PC-9 (cell line): ENCODE measurements at regions of chr9 and their contacts with region 1.

Region 1: DNA sequence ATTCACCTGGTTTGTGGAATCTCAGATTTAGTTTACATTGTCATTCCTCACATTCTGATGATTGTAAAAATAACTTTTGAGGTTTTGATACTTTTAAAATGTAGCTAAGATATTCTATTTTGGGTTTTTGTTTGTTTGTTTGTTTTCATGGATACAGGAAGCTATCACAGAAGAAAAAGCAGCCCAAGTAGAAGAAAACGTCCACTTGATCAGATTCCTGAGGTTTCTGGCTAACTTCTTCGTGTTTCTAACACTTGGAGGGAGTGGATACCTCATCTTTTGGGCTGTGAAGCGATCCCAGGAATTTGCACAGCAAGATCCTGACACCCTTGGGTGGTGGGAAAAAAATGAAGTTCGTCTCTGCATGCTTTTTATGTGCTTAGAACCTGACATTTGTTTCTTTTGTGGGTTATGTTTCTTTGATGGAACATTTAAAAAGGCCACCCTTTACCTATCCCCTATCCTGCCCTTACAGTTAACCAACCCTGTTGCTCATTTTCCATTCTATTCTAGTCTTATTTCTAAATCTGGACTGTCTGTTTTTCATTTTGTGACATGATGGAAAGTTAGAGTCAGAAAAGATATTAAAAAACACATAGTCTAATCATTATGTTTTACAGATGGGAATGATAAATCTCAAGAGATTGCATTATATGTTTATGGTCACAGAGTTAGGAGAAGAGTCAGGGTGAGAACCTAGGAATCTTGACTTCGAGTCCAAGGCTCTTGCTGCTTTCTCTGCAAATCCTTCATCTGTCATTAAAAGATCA is 163.7 kb downstream of the ALDH1A1 start:
- DNase-seq: peak; percentile 25 to 53
- H3K4me3 ChIP-seq: no peak overlapping the region
- H3K27ac ChIP-seq: no peak overlapping the region
- H3K4me1 ChIP-seq: 0 out of 2 replicates have a peak, but pooled peaks cover 3% of the 10 kb centered on the region
- H3K27me3 ChIP-seq: no peaks in the 10 kb centered on the region
- CTCF ChIP-seq: no peak

Region 2: GRCh38 chr9:72140582-72140981 is 648.6 kb before region 1 on chr9:
- CTCF ChIA-PET with region 1: no interaction called
- POLR2A ChIA-PET with region 1: interaction called, 10 read pairs
- intact Hi-C with region 1: no loop called
- DNase-seq: peak; percentile 52 to 92
- H3K4me3 ChIP-seq: no peak overlapping the region
- H3K27ac ChIP-seq: peak overlapping the region; percentile 81
- H3K4me1 ChIP-seq: peaks cover 41% of the 10 kb centered on the region
- H3K27me3 ChIP-seq: no peaks in the 10 kb centered on the region
- CTCF ChIP-seq: no peak

Region 3: GRCh38 chr9:72817413-72817812 is 28.3 kb after region 1 on chr9:
- CTCF ChIA-PET with region 1: interaction called, 10 read pairs
- POLR2A ChIA-PET with region 1: no interaction called
- intact Hi-C with region 1: no loop called
- DNase-seq: no peak
- H3K4me3 ChIP-seq: no peak overlapping the region
- H3K27ac ChIP-seq: no peak overlapping the region
- H3K4me1 ChIP-seq: no peaks in the 10 kb centered on the region; the same call in 1 of the 2 replicates
- H3K27me3 ChIP-seq: no peaks in the 10 kb centered on the region
- CTCF ChIP-seq: no peak